ENCODE measurements at regions of chr13 and their contacts with region 1.

Region 1: DNA sequence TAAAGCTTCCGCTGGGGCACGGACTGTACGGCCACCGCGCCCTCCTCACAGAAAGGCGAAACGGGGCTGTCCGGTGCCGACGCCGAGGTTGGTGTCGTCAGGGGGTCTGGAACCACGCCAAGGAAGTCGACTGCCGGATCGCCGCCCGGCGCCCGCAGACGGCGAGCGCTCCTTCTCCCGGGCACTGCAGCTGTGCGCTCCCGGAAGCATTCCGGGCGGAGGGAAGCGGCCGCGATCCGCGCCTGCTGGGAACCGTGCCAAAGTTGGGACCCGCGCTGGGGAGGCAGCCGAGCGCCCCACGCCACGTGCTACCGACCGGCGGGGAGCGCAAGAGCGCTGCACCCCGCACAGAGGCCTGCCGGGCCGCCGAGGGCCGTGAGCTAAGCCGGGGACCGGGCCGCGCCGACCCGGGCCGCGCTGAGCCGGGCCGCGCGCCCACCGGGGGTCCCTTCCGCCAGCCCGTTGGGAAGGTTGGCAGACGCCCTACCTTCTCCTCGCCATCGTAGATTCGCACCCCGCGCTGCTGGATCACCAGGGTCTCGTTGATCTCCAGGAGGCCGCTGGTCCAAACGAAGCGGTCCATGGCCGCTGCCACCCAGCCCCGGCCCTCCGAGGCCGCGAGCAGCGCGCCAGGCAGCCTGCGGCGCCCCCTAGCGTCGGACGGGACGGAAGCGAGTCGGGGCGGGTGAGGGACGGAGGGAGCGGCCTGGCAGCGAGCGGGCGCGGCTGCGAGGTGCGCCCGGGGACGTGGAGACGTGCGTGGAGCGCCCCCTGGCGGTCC is at the start of gene VPS36:
- DNase-seq: peak; percentile 99
- ATAC-seq: peak; percentile 93
- total RNA-seq, gene VPS36: 24.1 TPM

Region 2: GRCh38 chr13:52194184-52194868 is 255.9 kb before region 1 on chr13:
- intact Hi-C with region 1: loop called (anchors 2 kb)
- DNase-seq: peak; percentile 87
- ATAC-seq: peak; percentile 96

Region 3: GRCh38 chr13:52345048-52345447 is 105.2 kb before region 1 on chr13:
- intact Hi-C with region 1: loop called (anchors 2 kb)
- DNase-seq: no peak
- ATAC-seq: no peak

Region 4: GRCh38 chr13:52405767-52406494 is 44.3 kb before region 1 on chr13 and contains the start of gene THSD1:
- intact Hi-C with region 1: loop called (anchors 1 kb)
- DNase-seq: peak; percentile 89
- ATAC-seq: peak; percentile 96
- total RNA-seq, gene THSD1: 4.6 TPM

Region 5: DNA sequence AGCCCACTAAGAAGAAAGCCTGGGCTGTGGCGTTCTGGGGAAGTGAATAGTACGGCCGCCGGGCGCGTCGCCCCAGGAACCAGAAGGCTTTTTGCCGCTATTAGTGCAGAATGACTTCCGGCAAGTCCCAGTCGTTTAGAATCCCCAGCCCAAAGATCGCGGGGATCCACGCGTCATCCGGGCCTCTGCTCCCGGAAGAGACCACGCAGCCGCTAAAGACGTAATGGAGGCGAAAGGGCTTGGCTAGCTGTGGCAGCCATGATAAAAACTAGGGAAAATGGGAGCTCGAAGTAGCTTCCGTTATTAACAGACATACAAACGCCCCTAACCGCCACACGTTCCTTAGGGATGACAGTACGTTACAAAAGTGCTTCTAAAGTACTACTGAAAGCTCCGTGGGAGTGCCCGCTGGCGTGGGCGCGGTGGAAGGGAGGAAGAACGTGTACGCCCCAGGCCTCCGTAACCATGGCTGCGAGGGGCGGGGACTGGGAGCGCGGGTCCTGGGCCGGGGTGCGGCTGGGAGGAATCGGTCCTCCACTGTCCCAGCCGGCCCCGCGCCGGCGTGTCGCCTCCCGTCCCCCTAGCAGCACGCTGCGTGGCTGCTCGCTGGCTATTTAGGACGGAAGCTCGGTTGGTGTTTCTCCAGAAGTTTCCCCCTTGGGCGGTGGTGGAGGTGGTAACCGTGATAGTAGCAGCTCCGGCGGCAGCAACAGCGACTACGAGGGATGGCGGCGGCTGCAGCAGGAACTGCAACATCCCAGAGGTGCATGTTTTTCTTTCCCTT is 202.2 kb after region 1 on chr13 and contains the start of gene SUGT1:
- intact Hi-C with region 1: loop called (anchors 5 kb)
- DNase-seq: peak; percentile 99
- ATAC-seq: peak; percentile 100
- total RNA-seq, gene SUGT1: 55.5 TPM